ENCODE measurements at regions of chr3 and their contacts with region 1.

Region 1: GRCh38 chr3:45688882-45689756 is at the start of gene SACM1L:
- DNase-seq: peak; percentile 96
- H3K4me3 Mint-ChIP-seq: peak within 1 kb of the TSS; percentile 95
- H3K27ac Mint-ChIP-seq: peak within 1 kb of the TSS; percentile 100
- H3K4me1 Mint-ChIP-seq: peaks cover 59% of the 10 kb centered on the region
- H3K27me3 Mint-ChIP-seq: peaks cover 4% of the 10 kb centered on the region
- total RNA-seq, gene SACM1L: 112 and 114 TPM in 2 replicates

Region 2: GRCh38 chr3:45387636-45388348 is 301.3 kb before region 1 on chr3:
- intact Hi-C with region 1: loop called (anchors 1 kb)
- DNase-seq: peak; percentile 3
- H3K4me3 Mint-ChIP-seq: peak overlapping the region; percentile 96
- H3K27ac Mint-ChIP-seq: peak overlapping the region; percentile 84
- H3K4me1 Mint-ChIP-seq: peaks cover 18% of the 10 kb centered on the region
- H3K27me3 Mint-ChIP-seq: peaks cover 18% of the 10 kb centered on the region

Region 3: GRCh38 chr3:45665101-45665572 is 24.0 kb before region 1 on chr3:
- intact Hi-C with region 1: loop called (anchors 1 kb)
- DNase-seq: peak; percentile 34
- H3K4me3 Mint-ChIP-seq: peak overlapping the region; percentile 83
- H3K27ac Mint-ChIP-seq: peak overlapping the region; percentile 86
- H3K4me1 Mint-ChIP-seq: peaks cover 53% of the 10 kb centered on the region
- H3K27me3 Mint-ChIP-seq: no peaks in the 10 kb centered on the region

Region 4: GRCh38 chr3:45915518-45916231 is 226.6 kb after region 1 on chr3:
- intact Hi-C with region 1: loop called (anchors 1 kb)
- DNase-seq: peak; percentile 65
- H3K4me3 Mint-ChIP-seq: peak overlapping the region; percentile 58
- H3K27ac Mint-ChIP-seq: peak overlapping the region; percentile 83
- H3K4me1 Mint-ChIP-seq: peaks cover 33% of the 10 kb centered on the region
- H3K27me3 Mint-ChIP-seq: peaks cover 30% of the 10 kb centered on the region

Region 5: DNA sequence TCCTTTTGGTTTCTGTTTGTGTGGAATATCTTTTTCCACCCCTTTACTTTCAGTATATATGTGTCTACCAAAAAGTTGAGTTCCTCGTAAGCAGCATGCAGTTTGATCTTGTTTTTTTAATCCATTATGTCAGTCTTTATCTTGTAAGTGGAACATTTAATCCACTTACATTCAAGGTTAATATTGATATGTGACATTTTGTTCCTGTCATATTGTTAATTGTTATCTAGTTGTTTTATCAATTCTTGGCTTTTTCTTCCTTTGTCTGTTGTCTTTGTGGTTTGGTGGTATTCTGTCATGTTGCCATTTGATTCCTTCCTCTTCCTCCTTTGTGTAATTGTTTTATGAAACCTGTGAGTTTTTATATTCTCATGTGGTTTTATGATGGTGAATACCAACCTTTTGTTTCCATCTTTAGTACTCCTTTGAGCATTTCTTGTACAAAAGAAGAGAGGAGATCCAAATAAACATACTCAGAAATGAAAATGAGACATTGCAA is 381.5 kb after region 1 on chr3:
- intact Hi-C with region 1: loop called (anchors 2 kb)
- DNase-seq: no peak
- H3K4me3 Mint-ChIP-seq: peak overlapping the region; percentile 53
- H3K27ac Mint-ChIP-seq: peak overlapping the region; percentile 96
- H3K4me1 Mint-ChIP-seq: peaks cover 70% of the 10 kb centered on the region
- H3K27me3 Mint-ChIP-seq: peaks cover 12% of the 10 kb centered on the region